ENCODE measurements at regions of chr7 and their contacts with region 1.

Region 1: GRCh38 chr7:75957012-75957736 is 37.2 kb downstream of the TMEM120A start:
- DNase-seq: peak in 1 of 5 donors; percentile 26
- ATAC-seq: peak in 3 of 4 donors; percentile 23 to 41 (median 26)
- H3K4me3 ChIP-seq: no peak overlapping the region
- H3K27ac ChIP-seq: no peak overlapping the region
- H3K4me1 ChIP-seq: peaks cover 0 to 21% (median 7%) of the 10 kb centered on the region in 12 donors
- H3K27me3 ChIP-seq: no peaks in the 10 kb centered on the region
- CTCF ChIP-seq: no peak
- POLR2A ChIP-seq: no peak

Region 2: GRCh38 chr7:75892634-75893272 is 64.4 kb before region 1 on chr7:
- intact Hi-C with region 1: no loop called
- DNase-seq: peak; percentile 51 to 82 (median 66)
- ATAC-seq: peak; percentile 30 to 82 (median 80)
- H3K4me3 ChIP-seq: no peak overlapping the region
- H3K27ac ChIP-seq: peak overlapping the region in 3 of 12 donors; percentile 9 to 29 (median 22)
- H3K4me1 ChIP-seq: peaks cover 0 to 7% (median 0%) of the 10 kb centered on the region in 12 donors
- H3K27me3 ChIP-seq: no peaks in the 10 kb centered on the region
- CTCF ChIP-seq: no peak
- POLR2A ChIP-seq: no peak

Region 3: DNA sequence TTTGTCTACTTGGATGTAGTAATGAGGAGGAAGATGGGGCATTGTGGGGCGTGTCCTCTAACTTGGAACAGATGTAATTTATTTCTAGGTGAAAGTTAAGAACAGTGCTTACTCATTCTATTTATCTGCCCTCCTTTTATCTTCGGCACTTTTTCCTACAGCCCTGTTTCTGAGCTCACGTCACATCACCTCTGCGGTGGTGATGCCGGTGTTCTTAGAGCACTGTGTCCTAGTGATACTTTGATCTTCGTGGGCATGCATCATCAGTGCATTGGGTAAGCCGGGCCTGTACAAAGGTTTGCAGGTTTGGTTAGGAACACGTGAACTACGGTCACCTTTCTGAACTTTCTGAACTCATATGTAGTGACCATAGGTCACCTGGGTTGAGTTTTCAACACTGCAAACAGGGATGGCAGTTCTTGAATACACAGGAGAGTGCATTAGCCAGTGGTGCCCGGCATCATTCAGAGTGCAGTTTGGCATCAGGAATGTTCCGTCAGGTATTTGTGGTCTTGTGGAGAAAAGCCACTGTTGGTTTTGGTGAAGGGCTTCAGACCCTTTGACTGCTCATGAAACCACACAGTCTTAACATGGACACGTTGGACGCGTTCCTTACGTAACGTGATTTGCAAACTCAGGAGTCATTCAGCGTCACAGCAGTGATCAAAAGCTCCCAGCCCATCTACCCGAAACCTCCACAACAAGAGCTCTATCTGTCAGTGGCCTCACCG is 36.6 kb before region 1 on chr7:
- intact Hi-C with region 1: loop called in 4 of 10 experiments (anchors 5 to 10 kb)
- DNase-seq: peak in 1 of 5 donors; percentile 80
- ATAC-seq: peak; percentile 67 to 88 (median 82)
- H3K4me3 ChIP-seq: no peak overlapping the region
- H3K27ac ChIP-seq: peak overlapping the region in 4 of 12 donors; percentile 8 to 84 (median 46)
- H3K4me1 ChIP-seq: peaks cover 9 to 78% (median 36%) of the 10 kb centered on the region in 12 donors
- H3K27me3 ChIP-seq: no peaks in the 10 kb centered on the region
- CTCF ChIP-seq: no peak
- POLR2A ChIP-seq: no peak

Measured in heart left ventricle (tissue), 16 donors.